CD4-positive, alpha-beta T cell (primary cell): ENCODE measurements at regions of chr3 and their contacts with region 1.

Region 1: DNA sequence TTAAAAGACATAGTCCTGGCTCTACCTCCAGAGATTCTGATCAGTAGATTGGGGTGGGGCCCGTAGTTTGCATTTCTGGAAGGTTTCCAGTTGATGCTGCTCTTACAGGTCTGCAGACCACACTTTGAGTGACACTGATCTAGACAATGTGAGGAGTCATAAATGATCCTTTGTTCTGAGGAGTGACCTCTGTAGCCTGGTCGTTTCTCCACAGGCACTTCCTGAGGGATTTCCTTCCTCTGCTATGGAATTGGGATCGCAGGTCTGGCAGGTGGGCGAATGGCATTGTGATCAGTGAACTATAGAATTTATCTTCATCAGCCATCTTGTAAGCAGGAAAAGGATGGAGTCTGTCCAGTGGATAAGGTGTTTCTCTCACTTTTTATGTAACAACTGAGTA is 5.5 kb downstream of the GFM1 start:
- DNase-seq: no peak
- ATAC-seq: no peak
- H3K4me3 ChIP-seq: no peak overlapping the region
- H3K4me3 Mint-ChIP-seq: no peak overlapping the region
- H3K27ac ChIP-seq: no peak overlapping the region
- H3K27ac Mint-ChIP-seq: no peak overlapping the region
- H3K4me1 ChIP-seq: peaks cover 3% of the 10 kb centered on the region
- H3K4me1 Mint-ChIP-seq: peaks cover 40% of the 10 kb centered on the region
- H3K27me3 ChIP-seq: no peaks in the 10 kb centered on the region
- H3K27me3 Mint-ChIP-seq: no peaks in the 10 kb centered on the region
- CTCF ChIP-seq: no peak

Region 2: DNA sequence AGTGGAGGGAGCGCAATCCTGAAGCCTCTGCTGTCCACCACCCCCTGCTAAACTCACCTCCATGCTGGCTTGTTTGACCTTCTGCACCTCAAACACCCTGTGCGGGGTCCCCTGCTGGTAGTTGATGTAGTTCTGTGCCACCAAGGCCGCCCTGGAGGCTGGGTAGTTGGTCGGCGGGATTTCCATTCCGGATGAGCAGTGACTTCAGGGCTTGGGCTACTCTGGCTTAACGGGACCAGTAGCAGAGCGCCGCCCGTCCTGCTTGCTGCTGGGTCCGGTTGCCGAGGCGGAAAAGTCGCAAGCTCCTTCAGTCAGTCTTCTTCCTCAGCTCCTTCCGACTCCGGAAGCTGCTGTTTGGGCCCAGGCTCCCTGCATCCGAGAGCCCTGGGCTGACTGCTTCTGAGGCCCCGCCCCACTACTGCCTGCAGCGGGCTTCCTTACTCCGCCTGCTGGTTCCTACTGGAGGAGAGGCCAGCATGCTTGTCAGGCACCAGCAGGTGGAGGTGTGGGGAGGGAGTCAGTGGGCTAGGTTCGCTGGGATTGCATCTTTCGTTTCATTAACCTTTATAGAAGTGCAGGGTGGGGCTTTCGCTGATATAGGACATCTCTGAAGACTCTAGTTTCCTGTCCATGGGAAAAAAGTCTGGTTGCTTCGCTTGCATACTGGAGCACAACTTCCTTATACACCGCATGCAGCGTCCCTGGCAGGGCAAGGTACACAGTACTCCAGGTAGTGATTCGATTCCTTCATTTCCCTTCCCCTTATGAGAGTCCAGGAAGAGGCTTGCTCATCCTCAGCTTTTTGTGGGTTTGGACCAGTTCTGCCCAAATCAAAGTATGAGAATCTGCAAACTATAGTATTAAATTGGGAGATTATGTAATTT is 22.7 kb after region 1 on chr3 and contains the start of gene LXN:
- CTCF ChIA-PET with region 1: interaction called, 13 read pairs
- POLR2A ChIA-PET with region 1: interaction called, 13 read pairs
- intact Hi-C with region 1: loop called in 1 of 2 experiments (anchors 2 kb)
- DNase-seq: peak; percentile 60 to 92 (median 74)
- ATAC-seq: peak; percentile 99
- H3K4me3 ChIP-seq: peak within 1 kb of the TSS; percentile 74
- H3K4me3 Mint-ChIP-seq: peak within 1 kb of the TSS; percentile 94
- H3K27ac ChIP-seq: peak within 1 kb of the TSS; percentile 41 to 49
- H3K27ac Mint-ChIP-seq: peak within 1 kb of the TSS; percentile 85
- H3K4me1 ChIP-seq: peaks cover 19% of the 10 kb centered on the region
- H3K4me1 Mint-ChIP-seq: peaks cover 32% of the 10 kb centered on the region
- H3K27me3 ChIP-seq: no peaks in the 10 kb centered on the region
- H3K27me3 Mint-ChIP-seq: no peaks in the 10 kb centered on the region
- CTCF ChIP-seq: peak; percentile 80
- total RNA-seq, gene LXN: 2.1 to 3.0 TPM